K562 (cell line): ENCODE measurements at regions of chr4 and their contacts with region 1.

Region 1: GRCh38 chr4:173231916-173232315 is 63.3 kb downstream of the GALNT7 start:
- DNase-seq: peak; percentile 24 to 66 (median 46)
- ATAC-seq: peak; percentile 90
- H3K4me3 ChIP-seq: no peak overlapping the region
- H3K27ac ChIP-seq: peak overlapping the region; percentile 24; the same call in 2 of the 3 replicates
- H3K4me1 ChIP-seq: peaks cover 0 to 24% of the 10 kb centered on the region in 2 experiments; a peak in 3 of 5 replicates
- H3K27me3 ChIP-seq: no peaks in the 10 kb centered on the region
- CTCF ChIP-seq: peak; percentile 49 to 73 (median 61); a peak in 5 of 6 replicates
- EP300 ChIP-seq: no peak
- POLR2A ChIP-seq: no peak
- RAD21 ChIP-seq: peak; percentile 43 to 66; a peak in 3 of 4 replicates

Region 2: GRCh38 chr4:172573899-172574298 is 658.0 kb before region 1 on chr4:
- CTCF ChIA-PET with region 1: no interaction called
- POLR2A ChIA-PET with region 1: no interaction called
- in situ Hi-C with region 1: no loop called
- intact Hi-C with region 1: no loop called
- DNase-seq: no peak
- ATAC-seq: no peak
- H3K4me3 ChIP-seq: no peak overlapping the region
- H3K27ac ChIP-seq: no peak overlapping the region
- H3K4me1 ChIP-seq: no peaks in the 10 kb centered on the region
- H3K27me3 ChIP-seq: no peaks in the 10 kb centered on the region
- CTCF ChIP-seq: no peak
- EP300 ChIP-seq: no peak
- POLR2A ChIP-seq: no peak
- RAD21 ChIP-seq: no peak

Region 3: DNA sequence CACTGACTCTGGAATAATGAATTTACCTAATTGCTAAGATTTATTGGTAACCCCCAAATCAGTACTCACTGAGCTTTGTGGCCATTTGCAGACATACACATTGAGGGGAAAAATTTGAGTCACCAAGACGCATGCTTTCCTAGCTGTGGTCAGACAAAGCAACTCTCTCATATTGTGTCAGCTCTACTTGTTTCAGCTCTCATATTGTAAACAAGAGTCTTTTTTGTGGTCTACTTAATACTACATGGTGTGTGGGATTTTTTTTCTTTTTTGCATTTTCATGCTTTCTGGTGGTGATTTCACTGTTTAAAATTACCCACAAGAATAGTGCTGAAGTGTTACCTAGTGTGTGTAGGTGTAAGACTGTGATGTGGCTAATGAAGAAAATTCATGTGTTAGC is 491.5 kb before region 1 on chr4:
- CTCF ChIA-PET with region 1: no interaction called
- POLR2A ChIA-PET with region 1: no interaction called
- in situ Hi-C with region 1: no loop called
- intact Hi-C with region 1: no loop called
- DNase-seq: no peak
- ATAC-seq: no peak
- H3K4me3 ChIP-seq: no peak overlapping the region
- H3K27ac ChIP-seq: no peak overlapping the region
- H3K4me1 ChIP-seq: no peaks in the 10 kb centered on the region
- H3K27me3 ChIP-seq: no peaks in the 10 kb centered on the region
- CTCF ChIP-seq: no peak
- EP300 ChIP-seq: no peak
- POLR2A ChIP-seq: no peak
- RAD21 ChIP-seq: no peak

Region 4: DNA sequence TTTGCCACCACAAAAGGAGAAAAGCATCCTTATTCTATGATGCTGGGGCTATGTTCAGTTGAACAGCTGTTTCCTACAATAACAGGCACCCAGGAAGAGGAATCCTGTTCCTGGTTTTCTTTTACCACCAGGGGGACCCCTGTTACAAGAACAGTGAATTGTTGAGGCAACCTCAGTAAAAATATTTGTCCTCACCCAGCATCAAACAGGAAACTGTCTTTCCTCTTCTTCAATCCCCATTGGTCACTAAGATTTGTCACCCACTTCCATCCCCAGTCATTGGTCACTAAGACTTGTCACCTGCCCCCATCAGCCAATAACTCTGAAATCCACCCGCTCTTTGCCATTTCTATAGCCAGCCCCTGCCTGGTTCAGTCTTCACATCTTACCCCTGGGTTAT is 206.8 kb before region 1 on chr4:
- CTCF ChIA-PET with region 1: no interaction called
- POLR2A ChIA-PET with region 1: no interaction called
- in situ Hi-C with region 1: no loop called
- intact Hi-C with region 1: loop called (anchors 1 kb)
- DNase-seq: peak; percentile 52 to 77 (median 58)
- ATAC-seq: peak; percentile 95
- H3K4me3 ChIP-seq: no peak overlapping the region
- H3K27ac ChIP-seq: no peak overlapping the region
- H3K4me1 ChIP-seq: no peaks in the 10 kb centered on the region
- H3K27me3 ChIP-seq: no peaks in the 10 kb centered on the region
- CTCF ChIP-seq: peak; percentile 72 to 87 (median 73)
- EP300 ChIP-seq: no peak
- POLR2A ChIP-seq: no peak
- RAD21 ChIP-seq: peak; percentile 87 to 93

Region 5: GRCh38 chr4:173257732-173258717 is 26.1 kb after region 1 on chr4:
- CTCF ChIA-PET with region 1: no interaction called
- POLR2A ChIA-PET with region 1: no interaction called
- in situ Hi-C with region 1: no loop called
- intact Hi-C with region 1: no loop called
- DNase-seq: peak; percentile 48 to 77 (median 56)
- ATAC-seq: peak; percentile 96
- H3K4me3 ChIP-seq: no peak overlapping the region
- H3K27ac ChIP-seq: no peak overlapping the region
- H3K4me1 ChIP-seq: peaks cover 0 to 10% of the 10 kb centered on the region in 2 experiments; a peak in 3 of 5 replicates
- H3K27me3 ChIP-seq: no peaks in the 10 kb centered on the region
- CTCF ChIP-seq: peak; percentile 75 to 86 (median 85)
- EP300 ChIP-seq: peak; percentile 54; the same call in 1 of the 2 replicates
- POLR2A ChIP-seq: no peak
- RAD21 ChIP-seq: peak; percentile 84 to 85